H1 (cell line): ENCODE measurements at regions of chr2 and their contacts with region 1.

Region 1: DNA sequence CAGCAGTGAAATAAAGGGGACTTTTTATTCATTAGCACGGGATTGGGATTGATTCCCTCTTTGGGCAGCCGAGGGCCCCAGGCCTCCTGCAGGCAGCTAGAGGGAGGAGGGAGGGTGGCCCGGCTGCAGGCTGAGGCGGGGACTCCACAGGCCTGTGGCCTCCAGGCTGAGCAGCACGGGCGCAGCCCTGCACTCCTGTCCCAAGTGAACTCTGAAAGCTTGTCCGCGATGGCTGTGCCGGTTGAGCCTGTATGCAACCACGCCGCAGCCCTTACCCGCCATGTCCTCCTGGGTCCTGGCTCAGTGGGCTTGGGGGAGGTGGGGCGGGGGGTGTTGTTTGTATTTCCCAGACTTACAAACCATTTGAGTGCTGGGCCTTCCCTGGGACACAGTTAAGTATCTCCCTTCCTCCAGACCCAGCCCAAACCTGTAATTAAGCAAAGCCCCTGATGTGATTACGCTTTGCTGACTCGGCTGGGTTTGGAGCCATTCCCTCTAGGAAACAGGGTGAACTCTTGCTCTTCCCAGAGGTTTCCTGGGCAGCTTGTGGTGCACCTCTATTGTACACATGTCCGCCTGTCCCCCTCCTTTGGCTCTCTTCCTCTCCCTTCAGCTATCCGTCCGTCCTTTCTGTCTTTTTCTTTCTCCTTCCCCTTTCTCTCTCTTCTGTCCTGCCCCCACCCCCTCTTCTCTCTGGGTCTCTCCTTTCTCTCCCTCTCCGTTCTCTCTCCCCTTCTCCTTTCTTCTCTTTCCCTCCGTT is 5.3 kb downstream of the GLI2 start:
- DNase-seq: peak in 1 of 2 experiments; percentile 72
- H3K4me3 ChIP-seq: peak overlapping the region; percentile 38 to 91 (median 52)
- H3K27ac ChIP-seq: peak overlapping the region; percentile 90
- H3K4me1 ChIP-seq: peaks cover 23 to 41% (median 34%) of the 10 kb centered on the region in 4 experiments
- H3K27me3 ChIP-seq: no peaks in the 10 kb centered on the region
- CTCF ChIP-seq: no peak
- EP300 ChIP-seq: no peak
- POLR2A ChIP-seq: peak; percentile 72 to 83
- RAD21 ChIP-seq: peak in 1 of 2 experiments; percentile 27; a peak in 1 of 4 replicates

Region 2: GRCh38 chr2:120472891-120473309 is 268.0 kb before region 1 on chr2:
- CTCF ChIA-PET with region 1: no interaction called
- POLR2A ChIA-PET with region 1: no interaction called
- DNase-seq: no peak
- H3K4me3 ChIP-seq: no peak overlapping the region
- H3K27ac ChIP-seq: no peak overlapping the region
- H3K4me1 ChIP-seq: no peaks in the 10 kb centered on the region
- H3K27me3 ChIP-seq: peaks cover 40 to 81% (median 75%) of the 10 kb centered on the region in 4 experiments
- CTCF ChIP-seq: no peak
- EP300 ChIP-seq: no peak
- POLR2A ChIP-seq: no peak
- RAD21 ChIP-seq: no peak

Region 3: GRCh38 chr2:120758181-120759144 is 17.5 kb after region 1 on chr2:
- CTCF ChIA-PET with region 1: interaction called, 10 read pairs
- POLR2A ChIA-PET with region 1: interaction called, 19 read pairs
- DNase-seq: no peak
- H3K4me3 ChIP-seq: no peak overlapping the region
- H3K27ac ChIP-seq: peak overlapping the region; percentile 14; the same call in 1 of the 2 replicates
- H3K4me1 ChIP-seq: peaks cover 21 to 47% (median 32%) of the 10 kb centered on the region in 4 experiments
- H3K27me3 ChIP-seq: no peaks in the 10 kb centered on the region
- CTCF ChIP-seq: no peak
- EP300 ChIP-seq: no peak
- POLR2A ChIP-seq: no peak
- RAD21 ChIP-seq: no peak

Region 4: DNA sequence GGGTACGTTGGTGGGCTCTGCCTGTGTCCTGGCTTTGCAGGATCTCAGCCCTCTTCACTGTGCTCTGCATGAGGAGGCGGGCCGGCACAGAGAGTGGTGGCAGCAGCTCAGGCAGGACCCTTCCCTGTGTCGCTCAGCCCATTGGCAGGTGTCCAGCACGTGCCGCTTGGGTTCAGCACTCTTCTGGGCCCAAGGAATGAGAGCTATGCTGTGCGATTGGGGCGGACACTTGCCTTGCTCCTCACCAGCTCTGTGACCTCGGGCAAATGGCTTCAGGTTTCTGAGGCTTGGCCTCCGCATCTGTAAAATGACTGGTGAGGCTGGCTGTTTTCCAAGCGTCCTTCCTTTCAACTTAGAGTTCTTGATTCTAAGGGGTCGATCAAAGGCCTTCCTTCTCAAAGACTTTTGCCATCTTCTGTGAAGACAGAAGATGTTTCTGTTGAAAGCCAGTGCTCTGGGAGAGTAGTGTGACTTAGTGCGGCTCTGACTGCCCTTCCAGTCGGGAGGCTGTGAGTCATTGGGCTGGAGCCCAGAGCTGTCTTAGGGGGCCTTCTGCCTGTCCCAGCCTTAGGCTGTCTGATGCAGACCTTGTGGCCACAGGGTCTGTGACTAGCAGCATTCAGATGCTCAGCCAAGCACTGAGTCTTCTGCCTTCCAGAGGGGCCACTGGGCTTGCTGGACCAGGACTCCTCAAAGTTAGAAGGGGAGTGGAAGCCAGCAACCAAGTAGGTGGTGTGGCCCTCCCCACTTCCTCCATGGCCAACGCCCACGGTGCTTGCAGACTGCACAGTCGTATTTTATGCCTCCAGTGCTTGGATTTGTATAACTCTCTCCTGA is 30.4 kb after region 1 on chr2:
- CTCF ChIA-PET with region 1: interaction called, 12 read pairs
- POLR2A ChIA-PET with region 1: interaction called, 8 read pairs
- DNase-seq: no peak
- H3K4me3 ChIP-seq: no peak overlapping the region
- H3K27ac ChIP-seq: no peak overlapping the region
- H3K4me1 ChIP-seq: peaks cover 20 to 58% (median 30%) of the 10 kb centered on the region in 4 experiments
- H3K27me3 ChIP-seq: no peaks in the 10 kb centered on the region
- CTCF ChIP-seq: no peak
- EP300 ChIP-seq: no peak
- POLR2A ChIP-seq: no peak
- RAD21 ChIP-seq: no peak